ENCODE measurements at regions of chr12 and their contacts with region 1.

Region 1: GRCh38 chr12:68610370-68611093 is at the start of gene RAP1B:
- DNase-seq: no peak
- ATAC-seq: peak; percentile 84
- H3K4me3 ChIP-seq: peak within 1 kb of the TSS; percentile 86
- H3K27ac ChIP-seq: peak within 1 kb of the TSS; percentile 98
- H3K4me1 ChIP-seq: peaks cover 4% of the 10 kb centered on the region; the same call in 1 of the 2 replicates
- H3K27me3 ChIP-seq: no peaks in the 10 kb centered on the region
- CTCF ChIP-seq: no peak
- EP300 ChIP-seq: no peak
- POLR2A ChIP-seq: peak; percentile 96
- RAD21 ChIP-seq: no peak
- polyA plus RNA-seq, gene RAP1B: 88.9 to 95.0 TPM

Region 2: DNA sequence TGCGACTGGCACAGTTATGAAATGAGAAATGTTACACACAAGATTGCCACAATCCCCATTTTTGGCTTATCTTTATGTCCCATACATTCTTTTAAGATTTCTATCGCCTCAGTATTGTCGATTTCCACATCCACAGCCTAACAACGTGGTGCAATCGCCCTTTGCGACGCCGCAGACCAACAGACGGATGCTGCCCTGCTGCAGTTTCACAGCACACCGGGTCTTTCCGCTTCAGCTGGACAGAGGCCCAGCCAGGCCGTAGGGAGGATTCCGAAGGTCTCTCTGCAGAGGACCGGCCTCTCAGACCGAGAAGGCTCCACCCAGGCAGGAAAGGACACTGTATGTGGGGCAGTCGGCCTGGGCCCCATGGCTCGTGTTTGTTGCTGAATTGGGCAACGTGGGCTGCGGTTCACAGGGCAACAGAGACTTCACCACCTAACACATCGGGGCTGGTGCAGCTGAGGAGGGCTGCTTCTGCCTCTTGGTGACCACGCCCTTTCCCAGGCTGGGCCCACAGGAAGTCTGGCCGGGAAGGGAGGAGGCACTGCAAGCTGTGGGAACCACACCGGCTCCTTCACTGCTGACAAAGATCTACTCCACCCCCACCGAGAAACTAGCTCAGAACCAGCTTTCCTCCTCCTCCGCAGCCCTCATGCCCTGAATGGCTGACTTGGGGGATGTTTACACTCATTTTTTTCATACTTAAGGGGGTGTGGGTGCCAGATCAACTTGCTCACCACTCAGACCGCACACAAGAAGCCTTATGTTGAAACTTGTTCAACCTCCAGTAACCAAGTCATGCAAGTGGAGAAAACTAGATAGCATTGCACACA is 245.4 kb before region 1 on chr12:
- CTCF ChIA-PET with region 1: interaction called, 11 read pairs
- POLR2A ChIA-PET with region 1: interaction called, 5 read pairs
- RAD21 ChIA-PET with region 1: interaction called, 5 read pairs
- SMC1A ChIA-PET with region 1: interaction called, 36 read pairs
- in situ Hi-C with region 1: loop called (anchors 25 kb)
- intact Hi-C with region 1: loop called (anchors 2 kb)
- DNase-seq: peak; percentile 97
- ATAC-seq: peak; percentile 89
- H3K4me3 ChIP-seq: peak overlapping the region; percentile 53
- H3K27ac ChIP-seq: peak overlapping the region; percentile 94
- H3K4me1 ChIP-seq: peaks cover 23% of the 10 kb centered on the region
- H3K27me3 ChIP-seq: no peaks in the 10 kb centered on the region
- CTCF ChIP-seq: no peak
- EP300 ChIP-seq: peak; percentile 52 to 59; a peak in 3 of 4 replicates
- POLR2A ChIP-seq: peak; percentile 79
- RAD21 ChIP-seq: peak; percentile 10; the same call in 1 of the 2 replicates

Region 3: DNA sequence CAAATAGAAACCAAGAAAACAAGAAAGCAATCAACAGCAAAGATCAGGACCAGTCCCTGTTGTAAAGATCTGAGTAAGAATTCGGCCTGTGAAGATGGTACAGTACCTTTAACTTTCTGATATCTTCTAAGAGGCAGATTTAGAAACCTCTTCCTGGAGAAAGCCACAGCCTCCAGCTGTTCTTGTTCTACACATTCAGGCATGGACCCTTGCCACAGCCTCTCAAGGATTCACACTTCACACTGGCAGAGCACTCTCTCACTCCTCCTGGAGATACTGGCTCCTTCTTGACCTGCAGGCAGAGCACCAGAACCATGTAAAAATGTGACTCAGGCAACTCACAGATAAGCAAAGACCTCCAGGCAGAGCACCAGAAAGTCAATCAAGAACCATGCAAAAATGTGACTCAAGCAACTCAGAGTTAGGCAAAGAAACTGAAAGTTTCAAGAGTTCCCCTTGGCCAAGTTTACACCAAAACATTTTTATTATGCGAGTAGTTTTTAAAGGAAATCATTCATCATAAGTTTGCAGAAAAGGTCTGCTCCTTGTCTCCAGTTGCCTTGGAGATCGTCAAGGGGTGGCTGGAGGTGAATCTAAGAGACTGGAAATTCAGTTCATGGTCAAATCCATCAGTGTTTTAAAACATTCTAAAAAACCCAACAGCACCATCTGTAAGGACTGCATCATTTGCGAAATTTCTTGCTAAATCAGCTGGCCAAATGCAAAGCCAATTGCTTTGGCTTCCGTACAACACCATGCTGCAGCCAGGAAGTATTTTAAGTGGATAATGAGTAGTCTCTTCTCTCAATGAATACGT is 159.1 kb before region 1 on chr12:
- CTCF ChIA-PET with region 1: interaction called, 7 read pairs
- POLR2A ChIA-PET with region 1: interaction called, 11 read pairs
- RAD21 ChIA-PET with region 1: interaction called, 6 read pairs
- SMC1A ChIA-PET with region 1: interaction called, 20 read pairs
- in situ Hi-C with region 1: no loop called
- intact Hi-C with region 1: loop called (anchors 5 kb)
- DNase-seq: peak; percentile 88
- ATAC-seq: peak; percentile 78
- H3K4me3 ChIP-seq: peak overlapping the region; percentile 51
- H3K27ac ChIP-seq: peak overlapping the region; percentile 73
- H3K4me1 ChIP-seq: peaks cover 36% of the 10 kb centered on the region
- H3K27me3 ChIP-seq: no peaks in the 10 kb centered on the region
- CTCF ChIP-seq: no peak
- EP300 ChIP-seq: peak; percentile 32 to 50; a peak in 2 of 4 replicates
- POLR2A ChIP-seq: no peak
- RAD21 ChIP-seq: no peak

Region 4: DNA sequence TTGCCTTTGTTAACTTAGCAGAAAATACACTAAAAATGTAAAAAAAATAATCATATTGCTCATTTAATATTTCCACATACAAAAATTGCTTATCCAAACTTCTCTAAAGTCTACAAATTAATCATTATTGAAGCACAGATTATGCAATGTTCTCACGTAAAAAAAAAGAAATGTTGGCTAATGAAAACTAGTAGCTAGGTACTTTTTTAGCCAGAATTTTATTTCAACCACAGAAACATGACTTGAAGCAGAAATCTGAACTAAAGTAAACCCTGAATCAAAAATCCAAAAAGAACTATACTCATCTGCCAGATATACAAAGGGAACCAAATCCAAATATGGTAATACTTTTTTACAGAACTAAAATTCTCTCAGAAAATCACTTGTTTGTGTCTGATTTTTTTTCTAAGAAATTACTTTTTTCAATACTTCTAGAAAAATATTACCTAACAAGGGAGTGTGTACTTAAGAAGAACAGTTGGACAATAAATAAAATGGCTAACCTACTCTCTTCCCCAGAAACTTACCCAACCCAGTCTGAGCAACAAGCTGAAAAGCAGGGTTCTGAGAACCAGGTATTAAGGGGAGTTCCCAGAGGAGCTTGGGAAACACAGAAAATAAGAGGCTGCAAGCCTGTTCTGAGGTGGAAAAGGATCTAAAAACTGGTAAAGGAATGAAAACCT is 78.2 kb before region 1 on chr12:
- CTCF ChIA-PET with region 1: no interaction called
- POLR2A ChIA-PET with region 1: no interaction called
- RAD21 ChIA-PET with region 1: no interaction called
- SMC1A ChIA-PET with region 1: no interaction called
- in situ Hi-C with region 1: no loop called
- intact Hi-C with region 1: no loop called
- DNase-seq: no peak
- ATAC-seq: peak; percentile 61
- H3K4me3 ChIP-seq: no peak overlapping the region
- H3K27ac ChIP-seq: no peak overlapping the region
- H3K4me1 ChIP-seq: no peaks in the 10 kb centered on the region
- H3K27me3 ChIP-seq: no peaks in the 10 kb centered on the region
- CTCF ChIP-seq: no peak
- EP300 ChIP-seq: no peak
- POLR2A ChIP-seq: no peak
- RAD21 ChIP-seq: no peak

Region 5: DNA sequence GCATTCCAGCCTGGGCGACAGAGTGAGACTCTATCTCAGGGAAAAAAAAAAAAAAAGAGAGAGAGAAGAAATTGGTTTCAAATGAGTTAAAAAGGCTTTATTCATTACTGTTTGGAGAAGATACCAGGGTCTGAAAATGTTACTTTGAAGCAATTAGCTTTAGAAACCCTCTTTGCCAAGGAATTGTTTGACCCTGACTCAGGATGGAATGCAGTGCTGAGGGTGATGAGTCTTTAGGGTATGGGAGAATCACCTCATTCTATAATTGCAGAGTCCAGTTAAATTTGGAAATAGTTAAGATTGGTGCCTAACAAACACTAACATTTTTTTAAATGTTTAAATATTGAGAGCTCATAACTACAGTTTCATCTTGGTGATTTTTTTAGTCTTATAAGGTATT is 13.5 kb after region 1 on chr12:
- CTCF ChIA-PET with region 1: interaction called, 6 read pairs
- POLR2A ChIA-PET with region 1: interaction called, 8 read pairs
- RAD21 ChIA-PET with region 1: interaction called, 24 read pairs
- SMC1A ChIA-PET with region 1: interaction called, 53 read pairs
- in situ Hi-C with region 1: no loop called
- intact Hi-C with region 1: no loop called
- DNase-seq: no peak
- ATAC-seq: no peak
- H3K4me3 ChIP-seq: no peak overlapping the region
- H3K27ac ChIP-seq: no peak overlapping the region
- H3K4me1 ChIP-seq: peaks cover 29% of the 10 kb centered on the region
- H3K27me3 ChIP-seq: no peaks in the 10 kb centered on the region
- CTCF ChIP-seq: no peak
- EP300 ChIP-seq: no peak
- POLR2A ChIP-seq: no peak
- RAD21 ChIP-seq: no peak

Region 6: GRCh38 chr12:68641138-68641537 is 30.6 kb after region 1 on chr12:
- CTCF ChIA-PET with region 1: interaction called, 4 read pairs
- POLR2A ChIA-PET with region 1: interaction called, 7 read pairs
- RAD21 ChIA-PET with region 1: interaction called, 8 read pairs
- SMC1A ChIA-PET with region 1: interaction called, 26 read pairs
- in situ Hi-C with region 1: no loop called
- intact Hi-C with region 1: no loop called
- DNase-seq: peak; percentile 72
- ATAC-seq: peak; percentile 91
- H3K4me3 ChIP-seq: peak overlapping the region; percentile 54; the same call in 1 of the 2 replicates
- H3K27ac ChIP-seq: peak overlapping the region; percentile 35
- H3K4me1 ChIP-seq: peaks cover 17% of the 10 kb centered on the region; the same call in 1 of the 2 replicates
- H3K27me3 ChIP-seq: no peaks in the 10 kb centered on the region
- CTCF ChIP-seq: no peak
- EP300 ChIP-seq: peak in 1 of 2 experiments; percentile 16; a peak in 1 of 4 replicates
- POLR2A ChIP-seq: no peak
- RAD21 ChIP-seq: no peak